ENCODE measurements at regions of chr7 and their contacts with region 1.

Region 1: DNA sequence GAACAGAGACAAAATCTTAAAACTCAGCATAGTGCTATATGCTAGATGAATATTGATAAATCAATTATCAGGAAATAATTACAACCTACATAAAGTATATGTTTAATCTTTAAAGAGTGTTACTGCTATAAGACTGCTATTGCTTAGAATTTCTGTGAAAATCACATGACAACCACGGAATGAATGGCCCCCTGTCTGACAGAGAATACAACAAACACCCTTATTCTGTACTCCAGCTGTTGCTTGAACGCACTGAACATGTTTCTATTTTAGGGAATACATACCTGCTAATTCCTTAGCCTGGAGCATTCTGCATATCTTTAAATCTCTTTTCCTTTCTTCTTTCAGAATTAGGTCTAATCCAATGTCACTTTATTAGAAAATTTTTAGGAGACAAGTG is 452.4 kb upstream of the PHF14 start:
- DNase-seq: no peak
- ATAC-seq: no peak
- H3K4me3 ChIP-seq: no peak overlapping the region
- H3K27ac ChIP-seq: no peak overlapping the region
- H3K4me1 ChIP-seq: no peaks in the 10 kb centered on the region
- H3K27me3 ChIP-seq: no peaks in the 10 kb centered on the region
- CTCF ChIP-seq: no peak

Region 2: GRCh38 chr7:10455936-10456335 is 65.4 kb before region 1 on chr7:
- intact Hi-C with region 1: no loop called
- DNase-seq: no peak
- ATAC-seq: no peak
- H3K4me3 ChIP-seq: no peak overlapping the region
- H3K27ac ChIP-seq: no peak overlapping the region
- H3K4me1 ChIP-seq: no peaks in the 10 kb centered on the region
- H3K27me3 ChIP-seq: no peaks in the 10 kb centered on the region
- CTCF ChIP-seq: no peak

Region 3: DNA sequence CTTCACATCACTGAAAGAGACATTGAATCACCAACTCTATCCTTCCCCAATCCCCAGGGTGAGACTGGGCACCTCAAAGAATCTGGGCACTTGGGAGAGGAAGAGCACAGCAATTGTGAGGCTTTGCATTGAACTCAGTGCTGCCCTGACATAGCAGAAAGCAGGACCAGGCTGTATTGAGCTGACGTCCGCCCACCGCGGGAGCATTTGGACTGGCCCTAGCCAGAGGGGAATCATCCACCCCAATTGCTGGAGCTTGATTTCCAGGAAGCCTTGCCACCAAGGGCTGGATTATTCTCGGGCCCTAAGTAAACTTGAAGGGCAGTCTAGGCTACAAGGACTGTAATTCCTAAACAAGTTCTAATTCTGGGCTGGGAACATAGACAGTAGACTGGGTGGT is 36.1 kb after region 1 on chr7:
- intact Hi-C with region 1: no loop called
- DNase-seq: no peak
- ATAC-seq: no peak
- H3K4me3 ChIP-seq: no peak overlapping the region
- H3K27ac ChIP-seq: no peak overlapping the region
- H3K4me1 ChIP-seq: no peaks in the 10 kb centered on the region
- H3K27me3 ChIP-seq: no peaks in the 10 kb centered on the region
- CTCF ChIP-seq: no peak

Region 4: GRCh38 chr7:10604128-10604527 is 82.8 kb after region 1 on chr7:
- intact Hi-C with region 1: no loop called
- DNase-seq: no peak
- ATAC-seq: no peak
- H3K4me3 ChIP-seq: no peak overlapping the region
- H3K27ac ChIP-seq: no peak overlapping the region
- H3K4me1 ChIP-seq: no peaks in the 10 kb centered on the region
- H3K27me3 ChIP-seq: no peaks in the 10 kb centered on the region
- CTCF ChIP-seq: no peak

Region 5: DNA sequence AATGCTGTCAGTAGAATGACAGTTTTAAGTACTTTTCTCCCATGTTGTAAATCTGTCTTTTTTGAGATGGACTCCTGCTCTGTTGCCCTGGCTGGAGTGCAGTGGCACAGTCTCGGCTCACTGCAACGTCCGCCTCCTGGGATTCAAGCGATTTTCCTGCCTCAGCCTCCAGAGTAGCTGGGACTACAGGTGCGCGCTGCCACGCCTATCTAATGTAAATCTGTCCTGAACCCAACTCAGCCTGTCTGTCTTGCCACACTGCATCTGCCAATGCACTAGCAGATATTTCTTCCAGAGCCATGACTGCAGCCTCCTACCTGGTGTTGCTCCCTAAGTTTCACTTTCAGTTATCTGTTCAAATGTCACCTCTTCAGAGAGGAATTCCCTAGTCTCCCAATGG is 716.4 kb after region 1 on chr7:
- intact Hi-C with region 1: loop called in 1 of 10 experiments (anchors 5 kb)
- DNase-seq: no peak
- ATAC-seq: no peak
- H3K4me3 ChIP-seq: peak overlapping the region in 4 of 10 donors; percentile 12 to 37 (median 26)
- H3K27ac ChIP-seq: no peak overlapping the region
- H3K4me1 ChIP-seq: no peaks in the 10 kb centered on the region
- H3K27me3 ChIP-seq: no peaks in the 10 kb centered on the region
- CTCF ChIP-seq: no peak

Measured in heart right ventricle (tissue), 16 donors.